AG04450 (cell line): ENCODE measurements at regions of chr15 and their contacts with region 1.

Region 1: DNA sequence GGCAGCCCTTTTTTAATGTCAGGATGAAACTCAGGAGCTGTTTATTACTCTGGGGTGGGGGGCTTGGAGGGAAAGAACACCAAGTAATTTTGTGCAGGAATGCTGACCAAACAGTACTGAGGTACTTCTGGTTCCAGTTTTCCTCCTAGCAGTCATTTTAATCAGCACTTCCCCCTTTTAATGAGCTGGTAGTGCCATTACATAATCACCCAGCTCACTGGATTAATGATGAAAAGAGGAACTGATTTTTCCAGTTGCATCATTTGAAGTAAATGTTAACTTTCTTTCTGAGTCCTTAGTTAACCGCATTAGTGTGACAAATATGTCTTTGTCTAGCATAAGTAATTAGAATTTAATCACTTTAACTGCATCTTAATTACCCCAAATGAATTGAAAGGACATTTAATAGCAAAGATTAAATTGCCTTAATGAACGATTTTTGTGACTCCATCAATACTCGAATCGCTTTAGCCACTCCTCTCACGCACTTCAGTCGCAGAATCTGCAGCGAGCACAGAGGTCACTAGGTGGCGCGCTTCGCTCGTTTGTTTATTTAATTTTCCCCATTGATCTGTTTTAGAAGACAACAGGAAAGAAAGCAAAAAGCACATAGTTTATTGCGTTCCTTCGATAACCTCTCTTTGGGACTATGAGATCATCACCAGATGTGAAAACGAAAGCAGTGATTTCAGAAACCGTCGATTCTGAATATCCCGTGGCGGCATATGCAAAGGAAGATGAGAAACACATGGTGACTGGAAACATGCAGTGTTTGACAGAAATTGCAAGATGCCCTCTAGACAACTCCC is 9.8 kb downstream of the ONECUT1 start:
- DNase-seq: no peak
- H3K4me3 ChIP-seq: peak overlapping the region; percentile 50
- H3K27ac ChIP-seq: no peak overlapping the region
- H3K27me3 ChIP-seq: peaks cover 46% of the 10 kb centered on the region
- CTCF ChIP-seq: peak; percentile 88

Region 2: GRCh38 chr15:52765785-52766184 is 14.6 kb before region 1 on chr15:
- CTCF ChIA-PET with region 1: interaction called, 12 read pairs
- POLR2A ChIA-PET with region 1: no interaction called
- DNase-seq: no peak
- H3K4me3 ChIP-seq: no peak overlapping the region
- H3K27ac ChIP-seq: no peak overlapping the region
- H3K27me3 ChIP-seq: peaks cover 6% of the 10 kb centered on the region
- CTCF ChIP-seq: peak; percentile 39

Region 3: GRCh38 chr15:52822475-52822874 is 42.1 kb after region 1 on chr15:
- CTCF ChIA-PET with region 1: no interaction called
- POLR2A ChIA-PET with region 1: no interaction called
- DNase-seq: no peak
- H3K4me3 ChIP-seq: no peak overlapping the region
- H3K27ac ChIP-seq: no peak overlapping the region
- H3K27me3 ChIP-seq: no peaks in the 10 kb centered on the region
- CTCF ChIP-seq: no peak